ENCODE measurements at regions of chr4 and their contacts with region 1.

Region 1: DNA sequence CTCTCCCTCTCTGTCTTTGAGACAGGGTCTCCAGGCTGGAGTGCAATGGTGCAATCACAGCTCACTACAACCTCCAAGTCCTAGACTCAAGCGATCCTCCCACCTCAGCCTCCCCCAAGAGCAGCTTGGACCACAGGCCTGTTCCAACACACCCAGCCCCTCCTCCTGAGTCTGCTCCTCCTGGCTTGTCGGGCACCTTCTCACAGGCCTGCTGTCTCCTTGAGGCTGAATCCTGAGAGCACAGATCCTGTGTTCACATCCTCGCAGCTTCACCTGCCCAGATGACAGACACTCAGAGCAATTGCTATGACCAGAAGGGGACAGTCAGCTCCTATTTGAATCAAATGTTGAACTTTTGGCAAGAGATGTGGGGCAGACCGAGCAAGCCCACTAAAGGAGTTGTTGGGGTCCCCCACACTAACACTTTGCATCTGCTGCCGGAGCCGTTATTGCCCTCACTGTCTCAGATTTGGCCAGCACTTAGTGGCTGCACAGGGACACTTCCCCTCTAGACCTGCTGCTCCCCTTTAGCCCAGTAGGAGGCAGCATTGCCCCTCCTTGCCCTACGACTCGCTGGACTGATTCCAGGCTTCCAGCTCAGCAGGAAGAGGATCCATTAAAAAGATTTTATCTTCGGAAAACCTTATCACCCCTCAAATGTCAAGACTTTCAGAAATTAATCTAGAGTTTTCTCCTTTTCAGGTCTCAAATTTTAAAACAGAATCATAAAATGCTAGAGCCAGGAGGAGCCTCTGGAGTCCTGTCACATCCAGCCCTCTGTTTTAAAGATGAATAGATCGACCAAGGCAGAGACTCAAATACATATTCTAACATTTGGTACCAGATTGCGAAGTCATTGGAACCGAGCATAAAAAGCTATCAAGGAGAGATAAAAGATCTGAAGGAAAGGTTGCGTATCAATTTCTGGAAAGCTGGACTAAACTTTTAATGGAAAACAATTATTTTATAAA is 113.7 kb downstream of the USP46 start:
- DNase-seq: peak; percentile 74 to 77 (median 76)
- ATAC-seq: peak; percentile 98
- H3K4me3 ChIP-seq: no peak overlapping the region
- H3K27ac ChIP-seq: no peak overlapping the region
- H3K4me1 ChIP-seq: no peaks in the 10 kb centered on the region; a peak in 1 of 5 replicates
- H3K27me3 ChIP-seq: peaks cover 2 to 4% of the 10 kb centered on the region in 2 experiments; a peak in 1 of 5 replicates
- CTCF ChIP-seq: peak; percentile 84 to 94 (median 92)
- EP300 ChIP-seq: no peak
- POLR2A ChIP-seq: no peak
- RAD21 ChIP-seq: peak; percentile 90 to 95

Region 2: DNA sequence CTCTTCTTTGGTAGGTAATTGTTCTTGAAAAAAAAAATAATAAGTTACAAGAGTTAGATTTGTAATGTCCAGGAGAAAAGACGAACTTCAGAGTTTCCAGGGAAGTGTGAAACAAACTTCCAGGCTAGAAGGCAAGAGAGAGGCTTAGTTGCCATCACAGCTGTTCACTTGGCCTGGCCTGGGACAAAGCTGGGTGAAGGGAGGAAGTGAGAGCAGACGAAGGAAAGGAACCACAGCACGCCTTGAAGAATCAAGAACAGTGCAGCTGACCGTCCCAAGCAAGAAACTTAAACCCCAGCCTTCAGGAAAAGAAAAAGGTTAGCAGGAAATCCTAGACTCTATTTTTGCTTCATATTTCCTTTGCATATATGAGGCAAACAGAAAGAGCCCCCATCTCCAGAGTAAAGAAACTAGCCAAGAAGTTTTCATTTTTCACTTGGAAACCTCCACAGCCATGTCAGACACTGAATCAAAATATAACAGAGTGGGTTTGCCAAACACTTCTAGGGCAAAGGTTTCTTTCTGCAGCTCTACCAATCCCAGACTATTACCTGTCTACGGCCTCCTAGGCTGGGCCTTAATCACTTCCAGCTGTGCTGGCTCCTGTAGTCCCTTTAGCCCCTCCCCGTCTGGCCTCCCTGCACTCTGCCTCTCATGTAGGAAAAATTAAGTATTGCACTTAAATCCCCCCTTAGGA is 284.7 kb before region 1 on chr4:
- CTCF ChIA-PET with region 1: no interaction called
- POLR2A ChIA-PET with region 1: no interaction called
- in situ Hi-C with region 1: no loop called
- intact Hi-C with region 1: no loop called
- DNase-seq: no peak
- ATAC-seq: no peak
- H3K4me3 ChIP-seq: no peak overlapping the region
- H3K27ac ChIP-seq: no peak overlapping the region
- H3K4me1 ChIP-seq: no peaks in the 10 kb centered on the region
- H3K27me3 ChIP-seq: no peaks in the 10 kb centered on the region
- CTCF ChIP-seq: no peak
- EP300 ChIP-seq: no peak
- POLR2A ChIP-seq: no peak
- RAD21 ChIP-seq: no peak

Region 3: DNA sequence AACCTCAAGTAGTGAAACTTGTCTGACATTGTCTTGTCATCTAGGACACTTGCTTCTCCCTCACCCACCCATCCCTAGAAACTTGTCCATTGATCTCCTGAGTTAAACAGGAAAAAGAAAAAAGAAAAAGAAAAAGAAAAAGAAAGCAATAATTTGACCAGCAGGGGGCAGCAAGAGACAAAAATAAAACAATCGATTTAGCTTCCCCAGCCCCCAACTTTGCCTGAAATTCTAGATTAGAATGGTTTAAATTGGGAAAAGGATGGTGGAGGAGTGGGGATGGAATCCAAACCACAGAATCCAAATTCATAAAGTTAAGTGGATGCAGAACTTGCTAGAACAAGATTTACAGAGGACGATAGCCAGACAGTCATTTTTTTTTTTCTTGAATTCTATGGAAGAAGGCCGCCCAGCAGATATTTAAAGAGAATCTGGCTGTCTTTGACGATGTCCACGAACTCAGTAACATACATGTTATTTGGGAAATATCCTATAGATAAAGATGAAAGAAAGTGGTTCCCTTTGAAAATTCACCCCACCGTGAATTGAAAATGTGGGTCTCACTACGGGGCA is 169.2 kb before region 1 on chr4:
- CTCF ChIA-PET with region 1: no interaction called
- POLR2A ChIA-PET with region 1: no interaction called
- in situ Hi-C with region 1: no loop called
- intact Hi-C with region 1: loop called (anchors 10 kb)
- DNase-seq: peak; percentile 23 to 57 (median 32)
- ATAC-seq: no peak
- H3K4me3 ChIP-seq: no peak overlapping the region
- H3K27ac ChIP-seq: no peak overlapping the region
- H3K4me1 ChIP-seq: no peaks in the 10 kb centered on the region
- H3K27me3 ChIP-seq: no peaks in the 10 kb centered on the region; a peak in 2 of 5 replicates
- CTCF ChIP-seq: peak; percentile 31 to 66 (median 57); a peak in 5 of 6 replicates
- EP300 ChIP-seq: no peak
- POLR2A ChIP-seq: no peak
- RAD21 ChIP-seq: peak; percentile 60 to 66

Measured in K562 (cell line).